ENCODE measurements at regions of chr12 and their contacts with region 1.

Region 1: GRCh38 chr12:107779077-107779831 is 4.8 kb downstream of the ASCL4 start:
- DNase-seq: peak in 1 of 5 donors; percentile 32
- ATAC-seq: peak; percentile 50 to 61 (median 52)
- H3K4me3 ChIP-seq: peak overlapping the region in 1 of 12 donors; percentile 8
- H3K27ac ChIP-seq: peak overlapping the region in 1 of 12 donors; percentile 84
- H3K4me1 ChIP-seq: peaks cover 0 to 26% (median 0%) of the 10 kb centered on the region in 12 donors
- H3K27me3 ChIP-seq: peaks cover 13 to 46% (median 20%) of the 10 kb centered on the region in 9 donors
- CTCF ChIP-seq: no peak
- POLR2A ChIP-seq: no peak

Region 2: DNA sequence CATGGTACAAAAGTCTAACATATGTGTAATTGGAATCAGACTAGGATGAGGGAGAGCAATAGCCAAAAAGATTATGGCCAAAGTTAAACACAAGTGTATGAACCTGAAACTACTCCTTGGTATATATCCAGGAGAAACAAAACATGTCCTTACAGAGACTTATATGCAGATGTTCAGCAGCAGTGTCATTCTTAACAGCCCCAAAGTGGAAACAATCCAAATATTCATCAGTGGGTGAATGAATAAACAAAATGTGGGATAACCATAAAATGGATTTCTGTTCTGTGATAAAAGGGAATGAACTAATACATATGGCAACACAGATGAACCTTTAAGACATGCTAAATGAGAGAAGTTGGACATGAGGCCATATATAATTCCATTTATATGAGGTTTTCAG is 63.5 kb before region 1 on chr12:
- intact Hi-C with region 1: no loop called
- DNase-seq: no peak
- ATAC-seq: no peak
- H3K4me3 ChIP-seq: no peak overlapping the region
- H3K27ac ChIP-seq: no peak overlapping the region
- H3K4me1 ChIP-seq: no peaks in the 10 kb centered on the region
- H3K27me3 ChIP-seq: no peaks in the 10 kb centered on the region
- CTCF ChIP-seq: no peak
- POLR2A ChIP-seq: no peak

Region 3: DNA sequence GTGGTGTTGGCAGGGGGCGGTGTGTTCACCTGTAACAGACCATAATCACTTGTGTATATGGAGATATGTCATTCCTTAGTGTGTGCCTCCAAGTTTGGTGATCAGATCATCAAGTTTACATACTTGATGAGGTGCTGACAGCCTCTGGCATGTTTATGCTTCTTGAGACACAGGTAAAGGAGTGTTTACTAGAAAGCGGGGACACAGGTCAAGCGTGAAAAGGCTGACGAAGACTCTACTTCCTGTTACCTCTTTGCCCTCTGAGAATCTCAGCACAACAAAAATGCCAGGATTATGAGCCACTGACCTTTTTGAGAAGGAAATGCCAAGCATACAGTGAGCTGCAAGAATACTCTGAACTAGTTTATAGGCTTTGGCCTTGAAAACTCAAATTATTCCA is 47.9 kb before region 1 on chr12:
- intact Hi-C with region 1: no loop called
- DNase-seq: no peak
- ATAC-seq: no peak
- H3K4me3 ChIP-seq: no peak overlapping the region
- H3K27ac ChIP-seq: no peak overlapping the region
- H3K4me1 ChIP-seq: no peaks in the 10 kb centered on the region
- H3K27me3 ChIP-seq: no peaks in the 10 kb centered on the region
- CTCF ChIP-seq: no peak
- POLR2A ChIP-seq: no peak

Region 4: DNA sequence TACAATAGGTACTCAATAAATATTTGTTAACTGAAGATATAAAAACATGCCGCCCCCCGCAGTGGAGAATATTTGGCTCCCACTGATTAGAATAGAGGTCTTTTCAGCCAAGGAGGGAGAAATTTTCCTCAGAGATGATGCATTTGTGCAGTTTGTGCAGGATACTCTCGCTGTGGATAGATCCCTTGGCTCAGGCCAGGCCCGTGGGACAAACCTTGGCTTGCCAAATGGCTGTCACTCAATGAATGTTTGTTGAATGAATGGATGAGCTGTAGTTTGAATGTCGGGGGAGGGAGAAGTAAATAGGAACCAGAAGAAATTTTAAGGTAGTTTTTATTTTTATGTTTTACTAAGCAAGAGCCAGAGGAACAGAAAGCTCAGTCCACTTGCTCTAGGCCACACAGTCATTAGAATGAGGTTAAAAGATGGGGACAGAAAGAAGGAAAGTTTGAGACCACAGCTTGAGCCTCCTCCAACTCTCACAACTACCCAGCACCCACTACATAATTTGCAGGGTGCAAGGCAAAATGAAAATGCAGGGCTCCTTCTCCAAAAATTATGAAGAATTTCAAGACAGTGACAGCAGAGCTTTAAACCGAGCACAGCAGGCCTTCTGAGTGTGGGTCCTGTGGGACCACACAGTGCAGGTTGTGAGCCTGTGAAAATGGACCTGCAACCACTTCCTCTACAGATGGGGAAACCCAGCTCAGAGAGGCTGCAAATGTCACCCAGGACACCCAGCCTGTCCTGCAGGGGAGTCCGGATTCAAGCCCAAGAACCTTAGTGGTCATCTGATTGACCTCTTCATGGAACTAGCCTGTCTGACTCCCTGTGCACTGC is 401.2 kb after region 1 on chr12:
- intact Hi-C with region 1: loop called in 1 of 10 experiments (anchors 10 kb)
- DNase-seq: no peak
- ATAC-seq: no peak
- H3K4me3 ChIP-seq: no peak overlapping the region
- H3K27ac ChIP-seq: no peak overlapping the region
- H3K4me1 ChIP-seq: no peaks in the 10 kb centered on the region
- H3K27me3 ChIP-seq: no peaks in the 10 kb centered on the region
- CTCF ChIP-seq: no peak
- POLR2A ChIP-seq: no peak

Measured in heart left ventricle (tissue), 16 donors.